A549 (cell line): ENCODE measurements at regions of chr4 and their contacts with region 1.

Region 1: DNA sequence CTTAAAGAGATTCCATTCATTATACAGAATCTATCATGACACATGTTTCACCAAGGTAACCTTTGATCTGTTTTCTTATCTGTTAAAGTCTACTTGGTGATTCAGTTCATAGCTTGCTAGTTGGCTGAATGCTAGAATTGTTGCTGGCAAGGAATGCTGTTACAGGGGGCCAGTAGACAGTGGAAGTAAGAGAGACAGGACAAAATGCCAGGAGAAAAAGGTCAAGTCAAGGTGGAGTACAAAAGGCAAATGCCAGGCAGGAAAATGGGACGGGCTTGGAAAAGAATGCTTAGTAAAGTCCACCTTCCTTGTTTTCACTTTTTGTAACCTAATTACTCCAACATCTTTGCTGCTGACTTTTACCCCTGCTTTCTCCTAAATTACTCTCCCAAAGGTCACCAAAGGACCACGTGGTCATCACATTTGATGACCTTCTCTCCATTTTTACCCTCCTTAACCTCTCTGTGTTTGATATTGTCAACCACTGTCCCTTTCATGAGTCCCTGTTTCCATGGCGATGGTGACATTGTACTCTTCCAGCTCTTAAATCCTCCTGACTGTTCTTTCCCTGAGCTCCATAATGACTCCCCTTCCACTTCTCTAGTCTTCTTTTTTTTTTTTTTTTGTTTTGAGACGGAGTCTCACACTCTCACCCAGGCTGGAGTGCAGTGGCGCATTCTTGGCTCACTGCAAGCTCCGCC is 24.5 kb upstream of the TAPT1 start:
- DNase-seq: peak; percentile 38 to 65
- ATAC-seq: peak; percentile 91 to 93
- H3K4me3 ChIP-seq: no peak overlapping the region
- H3K27ac ChIP-seq: peak overlapping the region; percentile 81 to 88
- H3K4me1 ChIP-seq: peaks cover 51% of the 10 kb centered on the region
- CTCF ChIP-seq: no peak
- EP300 ChIP-seq: peak; percentile 50 to 72; a peak in 3 of 5 replicates
- POLR2A ChIP-seq: no peak
- RAD21 ChIP-seq: no peak

Region 2: GRCh38 chr4:16225863-16226815 is 24.7 kb before region 1 on chr4 and contains the start of gene TAPT1:
- CTCF ChIA-PET with region 1: no interaction called
- POLR2A ChIA-PET with region 1: interaction called, 10 read pairs
- DNase-seq: peak; percentile 38 to 48
- ATAC-seq: peak; percentile 62 to 80
- H3K4me3 ChIP-seq: peak within 1 kb of the TSS; percentile 95
- H3K27ac ChIP-seq: peak within 1 kb of the TSS; percentile 100
- H3K4me1 ChIP-seq: peaks cover 25% of the 10 kb centered on the region
- CTCF ChIP-seq: no peak
- EP300 ChIP-seq: no peak
- POLR2A ChIP-seq: peak; percentile 35
- RAD21 ChIP-seq: no peak
- polyA plus RNA-seq, gene TAPT1: 17.1 and 20.2 TPM in 2 replicates

Region 3: DNA sequence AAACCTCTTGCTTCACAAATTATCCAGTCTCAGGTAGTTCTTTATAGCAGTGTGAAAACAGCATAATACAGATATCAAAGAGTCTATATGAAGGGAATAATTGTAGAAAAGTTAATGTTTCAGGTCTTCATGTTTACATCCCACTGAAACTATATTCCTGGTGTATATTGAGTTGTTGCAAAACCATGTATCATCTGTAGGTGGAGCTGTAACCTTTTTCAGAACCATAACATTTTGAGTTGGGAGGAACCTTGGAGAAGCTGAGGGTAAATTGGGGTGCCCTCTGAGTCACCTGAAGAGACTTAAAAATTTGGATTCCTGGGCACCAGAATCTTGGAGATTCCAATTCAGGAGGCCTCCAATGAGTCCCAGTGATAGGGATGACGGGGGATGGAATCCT is 27.4 kb after region 1 on chr4:
- CTCF ChIA-PET with region 1: no interaction called
- POLR2A ChIA-PET with region 1: no interaction called
- DNase-seq: no peak
- ATAC-seq: no peak
- H3K4me3 ChIP-seq: no peak overlapping the region
- H3K27ac ChIP-seq: no peak overlapping the region
- H3K4me1 ChIP-seq: no peaks in the 10 kb centered on the region
- CTCF ChIP-seq: no peak
- EP300 ChIP-seq: no peak
- POLR2A ChIP-seq: no peak
- RAD21 ChIP-seq: no peak